Heart left ventricle (tissue), 16 donors: ENCODE measurements at regions of chr14 and their contacts with region 1.

Region 1: GRCh38 chr14:104137297-104138097 is 890 bp upstream of the KIF26A start:
- DNase-seq: peak; percentile 71 to 89 (median 78)
- ATAC-seq: peak; percentile 62 to 88 (median 80)
- H3K4me3 ChIP-seq: peak overlapping the region; percentile 54 to 83 (median 60)
- H3K27ac ChIP-seq: peak overlapping the region in 11 of 12 donors; percentile 37 to 87 (median 71)
- H3K4me1 ChIP-seq: peaks cover 10 to 62% (median 27%) of the 10 kb centered on the region in 12 donors
- H3K27me3 ChIP-seq: peaks cover 8 to 63% (median 26%) of the 10 kb centered on the region in 9 donors
- CTCF ChIP-seq: peak; percentile 86 to 97 (median 94)
- POLR2A ChIP-seq: no peak

Region 2: GRCh38 chr14:104171029-104171697 is 33.7 kb after region 1 on chr14:
- intact Hi-C with region 1: loop called in 2 of 10 experiments (anchors 2 to 5 kb)
- DNase-seq: no peak
- ATAC-seq: no peak
- H3K4me3 ChIP-seq: peak overlapping the region in 3 of 12 donors; percentile 10 to 20 (median 15)
- H3K27ac ChIP-seq: peak overlapping the region in 6 of 12 donors; percentile 5 to 72 (median 54)
- H3K4me1 ChIP-seq: peaks cover 0 to 48% (median 26%) of the 10 kb centered on the region in 12 donors
- H3K27me3 ChIP-seq: no peaks in the 10 kb centered on the region
- CTCF ChIP-seq: no peak
- POLR2A ChIP-seq: no peak

Region 3: DNA sequence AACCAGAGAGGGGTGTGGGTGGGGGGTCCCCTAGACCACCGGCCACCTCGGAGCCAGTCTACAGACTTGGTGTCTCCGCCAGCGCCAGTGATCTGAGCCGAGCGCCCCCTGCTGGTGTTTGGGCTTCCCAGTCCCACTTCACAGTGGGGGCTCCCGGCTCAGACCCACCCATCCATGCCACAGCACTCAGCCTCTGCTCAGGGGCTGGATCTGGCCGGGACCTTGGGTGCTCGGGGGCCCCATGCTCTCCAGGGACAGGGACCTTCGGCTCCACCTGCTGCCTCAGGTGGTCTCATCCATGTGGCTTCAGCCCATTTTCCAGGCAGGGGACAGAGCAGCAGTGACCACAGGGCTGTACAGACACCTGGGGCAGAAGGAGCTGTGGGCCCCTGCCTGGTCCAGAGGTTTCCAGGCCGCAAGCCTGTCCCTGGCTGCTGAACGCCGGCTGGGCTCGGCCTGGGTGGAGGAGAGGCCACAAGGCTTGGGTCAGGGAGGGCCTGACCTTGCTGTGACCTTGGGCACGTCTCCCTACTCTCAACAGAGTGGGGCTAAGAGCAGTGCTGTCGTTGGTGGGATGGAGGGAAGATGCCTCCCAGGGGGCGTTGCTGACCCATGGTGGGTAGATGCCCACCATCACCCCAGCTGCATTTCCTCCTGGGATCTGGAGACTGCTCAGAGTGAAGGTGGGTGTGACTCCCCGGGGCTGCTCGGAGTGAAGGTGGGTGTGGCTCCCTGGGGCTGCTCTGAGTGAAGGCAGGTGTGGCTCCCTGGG is 87.2 kb after region 1 on chr14:
- intact Hi-C with region 1: loop called in 7 of 10 experiments (anchors 1 to 10 kb)
- DNase-seq: peak in 2 of 5 donors; percentile 28 to 74
- ATAC-seq: no peak
- H3K4me3 ChIP-seq: peak overlapping the region in 1 of 12 donors; percentile 45
- H3K27ac ChIP-seq: no peak overlapping the region
- H3K4me1 ChIP-seq: peaks cover 0 to 30% (median 6%) of the 10 kb centered on the region in 12 donors
- H3K27me3 ChIP-seq: peaks cover 0 to 27% (median 7%) of the 10 kb centered on the region in 9 donors
- CTCF ChIP-seq: peak; percentile 33 to 66 (median 54)
- POLR2A ChIP-seq: no peak

Region 4: DNA sequence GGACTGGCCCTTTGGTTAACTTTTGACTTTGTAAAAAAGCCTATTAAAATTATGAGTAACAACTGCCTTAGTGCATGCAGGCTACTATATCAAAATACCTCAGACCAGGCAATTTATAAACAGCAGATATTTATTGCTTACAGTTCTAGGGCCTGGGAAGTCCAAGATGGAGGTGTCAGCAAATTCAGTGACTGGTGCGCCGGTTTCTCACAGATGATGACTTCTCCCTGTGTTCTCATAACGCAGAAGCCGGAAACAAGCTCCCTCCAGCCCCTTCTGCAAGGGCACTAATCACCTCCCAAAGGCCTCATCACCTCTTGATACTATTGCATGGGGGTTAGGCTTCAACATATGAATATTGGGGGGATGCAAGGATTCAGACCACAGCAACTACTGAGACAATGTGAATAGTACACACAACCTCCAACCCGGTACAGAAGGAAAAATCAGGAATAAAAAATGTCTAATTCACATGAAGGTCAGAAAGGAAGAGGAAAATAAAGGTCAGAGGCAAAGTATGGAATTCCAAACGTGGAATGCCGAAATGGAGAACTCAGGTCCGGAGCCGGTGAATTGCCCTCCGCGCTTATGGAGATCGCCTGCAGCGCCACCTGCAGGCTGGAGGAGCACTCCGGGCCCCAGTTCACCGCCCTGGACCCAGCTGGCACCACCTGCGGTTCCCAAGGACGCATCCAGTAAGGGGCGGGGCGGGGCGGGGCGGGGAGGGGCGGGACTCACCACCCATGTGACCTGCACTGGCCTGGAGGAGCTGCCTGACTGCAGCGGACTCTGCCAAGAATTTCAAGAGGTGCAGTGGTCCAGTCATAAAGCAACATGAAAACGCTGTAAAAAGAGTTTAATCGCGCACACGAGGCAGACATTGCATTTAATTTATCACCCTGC is 204.3 kb after region 1 on chr14:
- intact Hi-C with region 1: loop called in 2 of 10 experiments (anchors 2 to 5 kb)
- DNase-seq: peak in 4 of 5 donors; percentile 41 to 77 (median 52)
- ATAC-seq: peak in 3 of 4 donors; percentile 74 to 94 (median 89)
- H3K4me3 ChIP-seq: no peak overlapping the region
- H3K27ac ChIP-seq: no peak overlapping the region
- H3K4me1 ChIP-seq: peaks cover 0 to 16% (median 0%) of the 10 kb centered on the region in 12 donors
- H3K27me3 ChIP-seq: peaks cover 0 to 15% (median 0%) of the 10 kb centered on the region in 9 donors
- CTCF ChIP-seq: peak; percentile 31 to 64 (median 50)
- POLR2A ChIP-seq: no peak

Region 5: DNA sequence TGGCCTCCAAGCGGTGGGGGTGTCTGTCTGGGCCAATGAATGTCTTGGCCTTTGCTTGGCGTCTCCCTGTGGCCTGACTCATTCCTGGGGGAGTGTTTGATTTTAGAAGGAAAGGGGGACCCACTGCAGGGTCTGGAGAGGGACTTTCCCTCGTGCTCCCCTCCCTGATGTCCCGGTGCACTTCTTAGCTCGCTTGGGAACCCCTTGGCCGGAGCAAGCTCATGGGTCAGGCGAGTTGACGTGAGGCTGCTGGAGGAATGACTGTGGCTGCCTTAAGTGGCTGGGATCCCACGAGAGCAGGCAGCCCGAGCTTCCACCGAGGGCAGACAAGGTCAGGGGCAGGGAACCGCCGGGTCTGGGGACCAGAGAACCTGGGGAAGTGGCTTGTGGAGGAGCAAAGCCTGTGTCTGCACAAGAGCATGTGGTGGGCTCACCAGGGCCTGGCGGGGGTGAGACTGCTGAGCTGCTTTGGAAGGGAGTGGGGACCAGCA is 223.6 kb after region 1 on chr14:
- intact Hi-C with region 1: no loop called
- DNase-seq: peak in 2 of 5 donors; percentile 5 to 47
- ATAC-seq: no peak
- H3K4me3 ChIP-seq: no peak overlapping the region
- H3K27ac ChIP-seq: no peak overlapping the region
- H3K4me1 ChIP-seq: peaks cover 0 to 2% (median 0%) of the 10 kb centered on the region in 12 donors
- H3K27me3 ChIP-seq: peaks cover 0 to 5% (median 0%) of the 10 kb centered on the region in 9 donors
- CTCF ChIP-seq: no peak
- POLR2A ChIP-seq: no peak

Region 6: DNA sequence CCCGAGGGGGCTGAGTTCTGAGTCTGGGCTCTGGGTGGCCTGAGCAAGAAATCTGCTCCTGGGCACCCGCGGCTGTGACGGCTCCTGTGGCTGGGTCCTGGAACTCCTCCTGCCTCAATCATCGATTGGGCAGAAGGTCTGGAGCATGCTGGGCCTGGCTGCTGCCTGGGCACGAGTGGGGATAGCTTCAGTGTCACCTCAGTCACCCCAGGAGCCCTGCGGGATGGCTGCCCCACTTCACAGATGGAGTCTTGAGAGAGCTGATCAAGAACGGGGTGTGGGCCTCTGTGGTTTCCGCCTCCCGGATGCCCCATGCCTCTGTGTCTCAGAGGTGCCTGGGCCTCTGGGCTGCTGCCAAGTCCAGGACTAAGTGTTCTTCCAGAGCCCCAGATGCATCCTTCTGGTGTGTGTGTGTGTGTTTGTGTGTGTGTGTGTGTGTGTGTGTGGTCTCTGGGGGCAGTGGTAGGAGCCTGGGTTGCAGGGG is 256.4 kb after region 1 on chr14:
- intact Hi-C with region 1: loop called in 2 of 10 experiments (anchors 5 to 10 kb)
- DNase-seq: peak; percentile 74 to 89 (median 83)
- ATAC-seq: peak; percentile 76 to 91 (median 82)
- H3K4me3 ChIP-seq: no peak overlapping the region
- H3K27ac ChIP-seq: peak overlapping the region; percentile 41 to 91 (median 74)
- H3K4me1 ChIP-seq: peaks cover 5 to 43% (median 25%) of the 10 kb centered on the region in 12 donors
- H3K27me3 ChIP-seq: no peaks in the 10 kb centered on the region
- CTCF ChIP-seq: no peak
- POLR2A ChIP-seq: no peak

Region 7: DNA sequence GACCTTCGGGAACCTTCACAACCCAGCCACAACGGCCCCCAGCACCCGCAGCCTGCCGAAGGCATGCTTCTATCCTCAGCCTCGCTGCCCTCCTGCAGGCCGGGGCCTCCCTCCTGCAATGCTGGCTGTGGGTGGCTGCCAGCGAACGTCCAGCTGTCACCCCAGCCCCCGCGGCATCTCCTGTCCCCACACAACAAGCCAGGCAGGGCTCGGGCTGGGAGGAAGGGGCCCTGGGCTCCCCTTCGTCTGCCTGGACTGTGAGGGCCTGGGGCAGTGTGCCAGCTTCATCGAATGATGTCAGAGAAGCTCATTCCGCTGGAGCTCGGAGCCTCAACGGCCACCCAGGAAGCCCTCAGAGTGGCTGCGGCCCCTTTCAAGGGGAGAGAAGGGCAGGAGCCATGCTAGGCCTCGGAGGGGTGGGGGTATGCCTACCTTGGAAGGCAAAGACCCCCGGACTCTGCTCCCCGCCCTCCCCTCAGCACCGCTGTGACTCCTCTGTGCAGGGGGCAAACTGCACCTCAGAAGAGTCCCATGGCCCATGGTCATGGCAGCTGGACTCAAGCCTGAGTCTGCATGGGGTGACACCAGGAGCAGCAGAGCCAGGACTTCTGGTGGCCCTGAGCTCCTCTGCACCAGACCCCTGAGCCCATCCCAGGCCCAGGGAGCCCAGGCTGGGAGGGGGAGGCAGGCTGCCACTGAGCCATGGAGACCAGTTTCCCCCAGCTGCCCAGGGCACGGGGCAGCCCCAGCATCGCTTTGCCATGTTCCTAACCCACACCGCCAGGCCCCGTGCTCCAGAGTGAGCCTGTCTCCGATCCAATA is 417.3 kb after region 1 on chr14:
- intact Hi-C with region 1: loop called in 1 of 10 experiments (anchors 5 kb)
- DNase-seq: peak in 4 of 5 donors; percentile 13 to 49 (median 22)
- ATAC-seq: no peak
- H3K4me3 ChIP-seq: no peak overlapping the region
- H3K27ac ChIP-seq: no peak overlapping the region
- H3K4me1 ChIP-seq: no peaks in the 10 kb centered on the region
- H3K27me3 ChIP-seq: peaks cover 0 to 15% (median 0%) of the 10 kb centered on the region in 9 donors
- CTCF ChIP-seq: no peak
- POLR2A ChIP-seq: no peak

Region 8: GRCh38 chr14:104639889-104640548 is 502.5 kb after region 1 on chr14:
- intact Hi-C with region 1: loop called (anchors 2 to 10 kb)
- DNase-seq: peak in 4 of 5 donors; percentile 43 to 63 (median 53)
- ATAC-seq: peak; percentile 54 to 89 (median 82)
- H3K4me3 ChIP-seq: no peak overlapping the region
- H3K27ac ChIP-seq: no peak overlapping the region
- H3K4me1 ChIP-seq: peaks cover 0 to 18% (median 0%) of the 10 kb centered on the region in 12 donors
- H3K27me3 ChIP-seq: peaks cover 0 to 27% (median 3%) of the 10 kb centered on the region in 9 donors
- CTCF ChIP-seq: peak; percentile 83 to 95 (median 89)
- POLR2A ChIP-seq: no peak